Calu3 (cell line): ENCODE measurements at regions of chr18 and their contacts with region 1.

Region 1: GRCh38 chr18:22084547-22084946 is 84.8 kb upstream of the GATA6 start:
- DNase-seq: peak; percentile 67
- H3K4me3 Mint-ChIP-seq: peak overlapping the region; percentile 64
- H3K27ac Mint-ChIP-seq: peak overlapping the region; percentile 77
- H3K4me1 Mint-ChIP-seq: peaks cover 29% of the 10 kb centered on the region
- H3K27me3 Mint-ChIP-seq: no peaks in the 10 kb centered on the region
- CTCF ChIP-seq: no peak

Region 2: GRCh38 chr18:22044474-22045220 is 39.9 kb before region 1 on chr18:
- CTCF ChIA-PET with region 1: no interaction called
- intact Hi-C with region 1: loop called (anchors 1 kb)
- DNase-seq: peak; percentile 72
- H3K4me3 Mint-ChIP-seq: peak overlapping the region; percentile 55
- H3K27ac Mint-ChIP-seq: peak overlapping the region; percentile 67
- H3K4me1 Mint-ChIP-seq: peaks cover 70% of the 10 kb centered on the region
- H3K27me3 Mint-ChIP-seq: no peaks in the 10 kb centered on the region
- CTCF ChIP-seq: no peak

Region 3: DNA sequence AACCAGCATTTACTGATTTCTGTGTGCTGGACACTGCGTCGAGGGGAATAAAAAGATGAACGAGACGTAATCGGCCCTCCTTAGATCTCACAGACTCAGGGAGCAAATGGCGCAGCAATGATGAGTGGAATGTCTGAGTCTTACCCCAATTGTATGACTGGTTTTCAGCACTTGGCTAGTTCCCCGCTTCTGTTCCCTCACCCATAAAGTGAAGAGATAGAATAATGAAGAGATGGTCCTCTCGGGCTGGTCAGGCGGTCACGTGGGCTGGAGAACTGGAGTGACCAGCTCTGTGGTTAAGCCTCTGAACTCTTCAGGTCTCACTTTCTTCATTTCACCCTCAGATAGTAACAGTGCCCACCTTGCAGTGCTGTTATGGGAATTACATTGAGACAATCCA is 67.6 kb after region 1 on chr18:
- CTCF ChIA-PET with region 1: no interaction called
- intact Hi-C with region 1: no loop called
- DNase-seq: no peak
- H3K4me3 Mint-ChIP-seq: no peak overlapping the region
- H3K27ac Mint-ChIP-seq: no peak overlapping the region
- H3K4me1 Mint-ChIP-seq: no peaks in the 10 kb centered on the region
- H3K27me3 Mint-ChIP-seq: peaks cover 9% of the 10 kb centered on the region
- CTCF ChIP-seq: no peak